ENCODE measurements at regions of chr7 and their contacts with region 1.

Region 1: GRCh38 chr7:47991741-47992311 is 12.4 kb upstream of the HUS1 start:
- DNase-seq: peak; percentile 97
- ATAC-seq: peak; percentile 97
- H3K4me3 Mint-ChIP-seq: peak overlapping the region; percentile 83
- H3K27ac Mint-ChIP-seq: peak overlapping the region; percentile 94
- H3K4me1 Mint-ChIP-seq: peaks cover 17% of the 10 kb centered on the region
- H3K27me3 Mint-ChIP-seq: no peaks in the 10 kb centered on the region
- CTCF ChIP-seq: peak; percentile 53

Region 2: DNA sequence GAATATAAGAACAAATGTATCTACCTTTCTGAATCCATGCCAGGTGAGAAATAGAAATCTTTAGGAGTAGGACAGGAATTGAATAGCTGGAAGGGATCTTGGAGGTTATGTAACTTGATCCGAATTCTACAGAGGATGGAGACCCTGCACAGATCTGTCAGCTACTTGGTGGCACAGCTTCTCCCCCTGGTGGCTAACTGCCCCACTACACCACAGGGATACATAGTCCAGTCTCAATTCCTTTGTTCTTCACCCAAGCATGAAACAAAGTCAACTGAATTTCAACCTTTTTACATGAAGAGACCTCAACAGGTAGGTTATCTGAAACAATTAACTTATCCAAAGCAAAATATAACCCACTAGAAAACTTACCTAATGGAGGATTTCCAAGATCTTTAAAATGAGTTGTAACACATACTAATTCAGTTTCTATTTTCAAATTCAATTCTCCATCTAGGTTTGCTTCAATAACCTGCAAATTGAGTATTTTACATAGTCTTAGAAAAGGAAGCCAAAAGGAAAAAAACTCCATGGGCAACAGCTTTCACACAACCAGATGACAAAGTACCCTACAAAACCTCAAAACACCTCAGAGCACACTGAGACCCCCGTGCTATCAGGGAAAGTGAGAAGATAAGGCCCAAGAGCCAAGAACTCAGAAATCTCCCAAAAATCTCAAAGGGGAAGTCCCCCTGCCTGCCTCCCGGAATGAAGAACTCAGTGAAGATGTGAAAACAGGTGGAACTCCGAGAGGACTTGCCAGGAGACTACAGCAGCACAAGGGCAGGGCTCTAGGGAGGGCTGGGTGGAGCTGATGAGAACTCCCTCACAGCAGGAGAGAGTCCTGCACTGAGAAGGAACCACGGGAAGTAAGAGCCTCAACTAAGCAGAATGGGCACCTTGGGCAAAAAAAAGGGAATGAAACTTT is 22.7 kb before region 1 on chr7:
- CTCF ChIA-PET with region 1: interaction called, 13 read pairs
- POLR2A ChIA-PET with region 1: interaction called, 9 read pairs
- intact Hi-C with region 1: no loop called
- DNase-seq: peak; percentile 75
- ATAC-seq: peak; percentile 83
- H3K4me3 Mint-ChIP-seq: no peak overlapping the region
- H3K27ac Mint-ChIP-seq: peak overlapping the region; percentile 51
- H3K4me1 Mint-ChIP-seq: peaks cover 28% of the 10 kb centered on the region
- H3K27me3 Mint-ChIP-seq: no peaks in the 10 kb centered on the region
- CTCF ChIP-seq: peak; percentile 85

Region 3: DNA sequence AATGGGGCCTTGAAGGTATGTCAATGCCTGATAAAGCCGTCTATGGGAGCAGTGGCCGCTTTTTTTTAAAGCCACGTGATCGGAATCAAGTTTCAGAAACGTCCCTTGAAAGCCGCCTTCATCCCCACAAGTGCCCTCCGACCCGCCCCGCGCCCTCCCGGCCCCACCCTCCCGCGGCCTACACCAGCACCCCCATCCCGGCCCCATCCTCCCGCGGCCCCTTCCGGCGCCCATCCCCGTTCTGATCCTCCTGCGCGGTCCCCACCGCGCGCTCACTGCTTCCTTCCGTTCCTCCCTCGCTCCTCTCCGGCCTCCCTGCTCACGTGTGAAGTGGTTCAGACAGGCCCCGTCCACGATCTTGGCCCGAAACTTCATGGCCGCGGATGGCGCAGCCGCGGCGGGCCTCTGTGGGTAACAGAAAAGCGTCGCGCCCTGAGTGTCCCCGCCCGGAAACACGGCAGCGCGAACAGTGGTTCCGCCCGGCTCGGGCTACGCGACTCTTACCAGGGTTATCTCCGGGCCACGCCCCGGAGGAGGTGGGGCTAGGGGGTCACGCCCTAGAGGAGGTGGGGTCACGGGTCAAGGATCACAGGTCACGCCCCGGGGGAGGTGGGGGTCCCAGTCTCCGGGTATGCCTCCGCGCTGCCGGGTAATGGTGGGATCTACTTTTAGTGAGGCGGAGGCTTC is 12.5 kb before region 1 on chr7 and contains the start of gene HUS1:
- CTCF ChIA-PET with region 1: interaction called, 13 read pairs
- POLR2A ChIA-PET with region 1: interaction called, 12 read pairs
- intact Hi-C with region 1: no loop called
- DNase-seq: peak; percentile 94
- ATAC-seq: peak; percentile 98
- H3K4me3 Mint-ChIP-seq: peak within 1 kb of the TSS; percentile 85
- H3K27ac Mint-ChIP-seq: peak within 1 kb of the TSS; percentile 97
- H3K4me1 Mint-ChIP-seq: peaks cover 26% of the 10 kb centered on the region
- H3K27me3 Mint-ChIP-seq: no peaks in the 10 kb centered on the region
- CTCF ChIP-seq: no peak
- total RNA-seq, gene HUS1: 37.1 to 43.5 TPM

Region 4: GRCh38 chr7:48083114-48083830 is 91.4 kb after region 1 on chr7:
- CTCF ChIA-PET with region 1: interaction called, 12 read pairs
- POLR2A ChIA-PET with region 1: interaction called, 8 read pairs
- intact Hi-C with region 1: loop called (anchors 5 kb)
- DNase-seq: peak; percentile 68
- ATAC-seq: peak; percentile 25
- H3K4me3 Mint-ChIP-seq: peak overlapping the region; percentile 3
- H3K27ac Mint-ChIP-seq: peak overlapping the region; percentile 81
- H3K4me1 Mint-ChIP-seq: peaks cover 54% of the 10 kb centered on the region
- H3K27me3 Mint-ChIP-seq: no peaks in the 10 kb centered on the region
- CTCF ChIP-seq: no peak

Region 5: GRCh38 chr7:48088559-48089045 is 96.8 kb after region 1 on chr7:
- CTCF ChIA-PET with region 1: interaction called, 12 read pairs
- POLR2A ChIA-PET with region 1: interaction called, 8 read pairs
- intact Hi-C with region 1: loop called (anchors 5 kb)
- DNase-seq: peak; percentile 95
- ATAC-seq: peak; percentile 74
- H3K4me3 Mint-ChIP-seq: peak overlapping the region; percentile 81
- H3K27ac Mint-ChIP-seq: peak overlapping the region; percentile 89
- H3K4me1 Mint-ChIP-seq: peaks cover 64% of the 10 kb centered on the region
- H3K27me3 Mint-ChIP-seq: no peaks in the 10 kb centered on the region
- CTCF ChIP-seq: no peak